ENCODE measurements at regions of chr3 and their contacts with region 1.

Region 1: DNA sequence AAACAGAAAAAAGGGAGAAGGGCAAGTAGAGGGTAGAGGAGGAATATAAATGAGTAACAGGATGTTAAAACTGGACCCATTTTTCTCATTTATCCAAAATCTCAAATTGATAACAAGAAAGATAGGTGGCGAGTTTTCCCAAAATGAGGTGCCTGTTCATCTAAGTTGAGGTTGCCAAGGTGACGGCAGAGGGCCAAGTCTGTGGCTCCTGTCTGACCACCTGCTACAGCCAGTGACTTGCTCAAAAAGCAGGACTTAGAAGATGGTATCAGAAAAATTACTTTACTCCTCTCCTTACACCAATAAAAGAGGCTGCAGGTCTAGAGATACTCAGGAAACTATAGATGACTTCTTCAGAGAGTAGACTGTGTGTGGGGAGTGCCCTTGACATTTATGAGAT is 137.6 kb upstream of the ZNF385D start:
- DNase-seq: no peak
- H3K4me3 ChIP-seq: no peak overlapping the region
- H3K27ac ChIP-seq: no peak overlapping the region
- H3K4me1 ChIP-seq: no peaks in the 10 kb centered on the region
- H3K27me3 ChIP-seq: no peaks in the 10 kb centered on the region
- CTCF ChIP-seq: no peak
- EP300 ChIP-seq: no peak
- POLR2A ChIP-seq: no peak

Region 2: DNA sequence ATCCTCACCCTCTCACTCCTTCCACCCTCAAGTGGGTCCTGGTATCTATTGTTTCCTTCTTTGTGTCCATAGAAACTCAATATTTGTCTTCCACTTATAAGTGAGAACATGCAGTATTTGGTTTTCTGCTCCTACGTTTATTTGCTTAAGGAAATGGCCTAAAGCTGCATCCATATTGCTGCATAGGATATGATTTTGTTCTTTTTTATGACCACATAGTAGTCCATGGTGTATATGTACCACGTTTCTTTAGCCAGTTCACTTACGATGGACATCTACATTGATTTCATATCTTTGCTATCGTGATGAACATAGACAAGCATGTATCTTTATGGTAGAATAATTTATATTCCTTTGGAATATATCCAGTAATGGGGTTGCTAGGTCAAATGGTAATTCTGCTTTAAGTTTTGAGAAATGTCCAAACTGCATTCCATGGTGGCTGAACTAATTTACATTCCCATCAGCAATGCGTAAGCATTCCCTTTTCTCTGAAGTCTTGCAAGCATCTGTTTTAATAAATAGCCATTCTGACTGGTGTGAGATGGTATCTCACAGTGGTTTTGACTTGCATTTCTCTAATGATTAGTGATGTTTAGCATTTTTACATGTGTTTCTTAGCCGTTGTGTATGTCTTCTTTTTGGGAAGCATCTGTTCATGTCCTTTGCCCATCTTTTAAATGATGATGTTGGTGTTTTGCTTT is 787.8 kb before region 1 on chr3:
- in situ Hi-C with region 1: no loop called
- intact Hi-C with region 1: no loop called
- DNase-seq: no peak
- H3K4me3 ChIP-seq: no peak overlapping the region
- H3K27ac ChIP-seq: no peak overlapping the region
- H3K4me1 ChIP-seq: no peaks in the 10 kb centered on the region
- H3K27me3 ChIP-seq: no peaks in the 10 kb centered on the region
- CTCF ChIP-seq: no peak
- EP300 ChIP-seq: no peak
- POLR2A ChIP-seq: no peak

Region 3: DNA sequence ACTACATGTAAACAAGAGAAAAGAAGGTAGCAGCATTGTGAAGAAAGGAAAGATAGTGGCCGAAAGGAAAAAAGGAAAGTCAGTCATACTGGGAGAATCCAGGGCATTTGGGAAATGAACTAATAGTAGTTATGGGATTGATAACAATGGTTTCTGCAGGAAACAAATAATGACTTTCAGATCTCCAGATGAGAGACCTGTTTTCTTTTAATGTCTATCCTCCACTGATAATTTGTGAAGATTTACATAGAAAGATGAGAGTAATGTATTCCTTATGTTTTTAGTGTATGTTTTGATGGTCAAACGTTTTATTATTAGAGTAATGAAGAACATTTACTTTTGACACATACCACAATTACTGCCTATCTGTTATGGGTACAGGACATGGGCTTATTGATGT is 122.7 kb before region 1 on chr3:
- in situ Hi-C with region 1: no loop called
- intact Hi-C with region 1: no loop called
- DNase-seq: no peak
- H3K4me3 ChIP-seq: no peak overlapping the region
- H3K27ac ChIP-seq: no peak overlapping the region
- H3K4me1 ChIP-seq: no peaks in the 10 kb centered on the region
- H3K27me3 ChIP-seq: no peaks in the 10 kb centered on the region
- CTCF ChIP-seq: no peak
- EP300 ChIP-seq: no peak
- POLR2A ChIP-seq: no peak

Region 4: DNA sequence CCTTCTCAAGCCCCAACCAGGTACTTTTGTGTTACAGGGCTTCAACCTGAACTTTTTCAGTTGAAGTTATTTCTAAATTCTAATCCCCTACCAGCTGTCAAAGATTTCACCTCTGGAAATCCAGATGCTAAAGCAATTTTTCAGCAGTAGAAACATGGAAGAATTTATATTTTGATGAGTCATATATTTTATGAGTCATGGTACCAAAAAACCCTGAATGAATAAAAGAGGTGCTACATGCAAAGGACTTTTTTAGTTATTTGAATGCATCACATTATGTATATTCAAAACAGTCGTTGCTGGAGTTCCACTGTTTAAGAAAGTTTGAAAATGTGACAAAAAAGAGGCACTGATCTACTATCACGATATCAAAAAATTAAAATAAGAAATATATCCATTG is 41.7 kb before region 1 on chr3:
- in situ Hi-C with region 1: no loop called
- intact Hi-C with region 1: loop called (anchors 2 kb)
- DNase-seq: no peak
- H3K4me3 ChIP-seq: no peak overlapping the region
- H3K27ac ChIP-seq: no peak overlapping the region
- H3K4me1 ChIP-seq: no peaks in the 10 kb centered on the region
- H3K27me3 ChIP-seq: no peaks in the 10 kb centered on the region
- CTCF ChIP-seq: no peak
- EP300 ChIP-seq: no peak
- POLR2A ChIP-seq: no peak

Region 5: DNA sequence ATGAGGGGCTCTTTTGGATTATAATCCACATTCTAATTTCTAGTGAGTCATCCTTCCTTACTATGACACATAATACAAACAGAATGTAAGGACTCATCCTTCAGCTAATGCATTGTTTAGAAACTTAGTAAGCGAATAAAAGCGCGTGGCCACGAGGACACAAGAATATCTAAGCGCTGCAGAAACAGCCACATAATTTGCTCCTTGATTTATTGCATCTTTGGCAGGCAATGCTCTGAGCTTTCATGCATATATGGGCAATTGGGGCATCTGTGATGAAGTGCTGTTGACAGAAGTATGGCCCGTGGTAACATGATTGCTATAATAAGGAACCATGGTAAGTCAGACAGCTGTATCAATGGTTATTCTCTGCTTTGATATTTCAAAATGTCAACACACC is 53.7 kb after region 1 on chr3:
- in situ Hi-C with region 1: no loop called
- intact Hi-C with region 1: no loop called
- DNase-seq: no peak
- H3K4me3 ChIP-seq: no peak overlapping the region
- H3K27ac ChIP-seq: no peak overlapping the region
- H3K4me1 ChIP-seq: no peaks in the 10 kb centered on the region
- H3K27me3 ChIP-seq: no peaks in the 10 kb centered on the region
- CTCF ChIP-seq: no peak
- EP300 ChIP-seq: no peak
- POLR2A ChIP-seq: no peak

Measured in transverse colon (tissue), 4 donors.